GM18951 (cell line): ENCODE measurements at regions of chr22 and their contacts with region 1.

Region 1: DNA sequence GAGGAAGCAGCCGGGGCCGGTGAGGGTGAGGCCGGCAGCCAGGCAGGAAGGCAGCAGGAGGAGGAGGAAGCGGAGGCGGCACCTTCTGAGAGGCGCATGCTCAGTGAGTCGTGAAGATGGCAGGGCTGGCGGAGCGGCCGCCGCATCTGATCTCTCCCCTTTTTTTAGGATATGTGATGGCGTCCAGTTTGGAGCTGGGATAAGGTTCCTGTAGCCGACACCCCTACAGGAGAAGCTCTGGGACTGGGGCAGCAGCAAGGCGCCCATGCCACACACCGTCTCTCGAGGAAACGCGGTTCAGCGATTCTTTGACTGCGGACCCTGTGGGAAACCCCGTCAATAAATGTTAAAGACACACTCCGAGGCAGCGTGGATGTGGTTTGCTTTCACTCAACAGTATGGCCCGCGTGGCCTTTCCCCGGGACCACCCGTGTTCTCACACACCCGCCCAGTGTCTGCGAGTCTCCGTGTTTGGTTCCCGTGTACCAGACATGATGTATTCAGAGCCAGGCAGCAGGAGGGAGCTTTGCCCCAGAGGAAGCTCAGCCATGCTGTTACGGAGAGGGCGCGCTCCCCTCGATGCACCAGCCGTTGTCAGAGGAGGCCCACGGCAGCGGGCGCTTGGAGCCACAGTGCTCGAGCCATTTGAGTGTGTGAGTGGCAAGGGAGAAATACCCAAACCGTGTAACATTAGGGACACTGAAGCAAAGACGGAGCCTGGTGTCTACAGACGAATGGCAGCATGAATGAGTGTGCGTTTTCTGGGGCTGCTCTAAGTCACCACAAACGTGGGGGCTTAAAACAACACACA is 27.7 kb upstream of the PARVB start:
- POLR2A ChIP-seq: peak; percentile 63

Region 2: DNA sequence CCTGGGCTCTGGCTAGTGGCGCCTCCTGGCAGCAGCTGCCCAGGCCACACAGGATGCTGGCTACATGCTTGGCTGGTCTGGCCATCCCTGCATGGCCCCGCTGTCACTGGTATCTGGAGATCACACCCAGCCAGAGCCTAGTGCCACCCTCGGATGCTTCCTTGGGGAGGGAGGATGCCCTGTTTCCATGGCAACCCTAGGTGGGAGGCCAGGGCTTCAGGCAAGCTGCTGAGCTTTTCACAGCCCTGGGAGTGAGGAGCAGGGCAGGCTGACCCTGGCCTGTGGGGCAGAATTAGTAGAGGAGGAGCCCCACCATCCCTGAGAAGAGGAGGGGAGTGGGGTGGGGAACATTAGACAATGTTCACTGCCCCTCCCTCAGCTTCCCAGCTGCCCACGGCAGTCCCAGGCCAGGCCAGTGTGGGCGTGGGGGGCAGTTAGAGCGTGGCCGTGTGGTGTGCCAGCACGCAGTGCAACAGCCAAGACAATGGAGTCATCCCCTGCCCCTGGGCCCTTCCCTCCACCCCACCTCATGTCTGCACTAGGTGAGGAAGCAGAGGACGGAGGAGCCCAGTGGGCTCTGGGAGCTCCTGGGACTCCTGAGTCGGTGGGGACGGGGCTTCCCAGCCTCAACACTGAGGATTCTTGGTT is 78.1 kb after region 1 on chr22:
- in situ Hi-C with region 1: loop called (anchors 5 kb)
- POLR2A ChIP-seq: no peak

Region 3: GRCh38 chr22:44363272-44363979 is 367.1 kb after region 1 on chr22:
- in situ Hi-C with region 1: no loop called
- POLR2A ChIP-seq: no peak

Region 4: DNA sequence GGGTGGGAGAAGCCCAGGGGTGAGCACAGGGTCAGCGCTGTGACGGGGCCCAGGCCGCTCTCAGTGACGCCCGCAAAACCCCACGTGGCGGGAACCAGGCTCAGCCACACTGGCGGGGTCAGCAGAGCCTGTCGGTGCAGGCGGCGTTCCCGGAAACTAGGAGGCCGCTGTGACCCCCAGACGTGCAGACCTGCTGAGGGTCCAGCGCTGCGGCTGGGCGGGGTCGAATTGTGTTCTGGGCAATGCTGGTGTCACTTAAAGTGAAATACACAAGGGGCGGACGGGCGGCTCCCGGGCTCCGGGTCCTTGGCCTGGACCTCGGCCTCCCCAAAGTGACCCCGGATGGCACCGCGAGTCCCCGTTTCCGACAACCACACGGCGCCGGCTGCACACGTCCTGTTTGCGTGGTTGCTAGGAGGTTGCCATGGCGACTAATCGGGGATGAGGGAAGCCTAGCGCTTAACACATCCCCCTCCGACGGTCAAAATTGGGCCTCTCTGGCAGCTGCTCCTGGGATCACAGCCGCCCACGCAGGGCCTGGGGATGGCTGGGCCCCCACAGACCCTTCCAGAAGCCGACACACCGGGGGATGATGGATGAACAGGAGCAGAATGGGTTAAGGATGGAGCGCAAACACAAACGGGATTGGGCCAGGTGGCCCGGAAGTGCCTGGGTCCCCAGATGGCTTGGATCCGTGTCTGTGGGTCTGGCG is 623.9 kb after region 1 on chr22:
- in situ Hi-C with region 1: loop called (anchors 5 kb)
- POLR2A ChIP-seq: no peak